T-cell (primary cell): ENCODE measurements at regions of chr20 and their contacts with region 1.

Region 1: DNA sequence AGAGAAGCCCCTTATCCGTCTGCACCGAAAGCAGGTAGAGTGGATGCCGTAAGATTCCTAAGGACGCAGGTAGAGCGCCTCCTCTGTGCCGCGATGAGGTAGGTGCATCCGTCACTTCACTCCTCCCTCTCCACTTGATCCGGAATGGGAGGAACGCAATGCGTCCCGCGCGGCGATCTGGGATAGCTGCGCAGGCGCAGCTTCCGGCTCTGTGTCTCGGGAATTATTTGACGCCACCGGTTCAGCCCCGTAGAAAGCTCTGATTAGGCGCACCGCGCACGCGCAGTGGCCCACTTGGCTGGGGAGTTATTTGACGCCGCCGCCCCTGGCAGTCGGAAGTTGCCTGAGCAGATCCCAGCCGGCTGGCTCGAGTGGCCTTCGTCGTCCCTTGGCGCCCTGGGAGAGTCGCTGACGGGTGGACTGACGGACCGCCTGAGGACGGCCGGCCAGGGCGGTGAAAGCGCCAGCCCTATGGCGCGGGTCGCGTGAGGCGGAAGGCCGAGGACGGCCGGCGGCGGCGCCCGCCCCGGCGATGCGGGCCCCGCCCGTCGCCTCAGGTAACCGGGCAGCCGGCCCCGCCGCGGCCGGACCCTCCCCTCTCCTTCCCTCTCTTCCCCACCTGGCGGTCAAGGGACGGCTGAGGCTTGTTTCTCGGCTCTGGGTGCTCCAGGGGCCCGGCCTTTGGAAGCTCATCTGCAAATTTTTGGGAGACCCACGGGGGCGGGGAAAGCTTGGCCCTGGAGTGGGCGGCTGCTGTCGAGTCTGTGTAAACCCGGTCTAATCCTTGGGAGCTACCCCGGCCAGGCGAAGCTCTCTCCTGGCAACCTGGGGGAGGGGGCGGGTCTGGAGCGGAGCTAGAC is at the start of gene RALGAPB:
- DNase-seq: peak; percentile 94 to 100 (median 97)
- ATAC-seq: peak; percentile 93 to 95 (median 94)
- H3K4me3 ChIP-seq: peak within 1 kb of the TSS; percentile 86 to 91
- H3K4me3 Mint-ChIP-seq: peak within 1 kb of the TSS; percentile 85 to 86 (median 85)
- H3K27ac ChIP-seq: peak within 1 kb of the TSS; percentile 85
- H3K27ac Mint-ChIP-seq: peak within 1 kb of the TSS; percentile 86 to 93
- H3K4me1 ChIP-seq: peaks cover 13 to 27% of the 10 kb centered on the region in 2 experiments
- H3K4me1 Mint-ChIP-seq: peaks cover 43 to 53% (median 53%) of the 10 kb centered on the region in 3 donors
- H3K27me3 ChIP-seq: peaks cover 0 to 3% of the 10 kb centered on the region in 2 experiments
- H3K27me3 Mint-ChIP-seq: no peaks in the 10 kb centered on the region
- total RNA-seq, gene RALGAPB: 42.7 to 50.1 (median 46.1) TPM

Region 2: GRCh38 chr20:38337561-38338140 is 135.1 kb before region 1 on chr20:
- CTCF ChIA-PET with region 1: no interaction called
- POLR2A ChIA-PET with region 1: no interaction called
- DNase-seq: no peak
- ATAC-seq: no peak
- H3K4me3 ChIP-seq: no peak overlapping the region
- H3K4me3 Mint-ChIP-seq: no peak overlapping the region
- H3K27ac ChIP-seq: no peak overlapping the region
- H3K27ac Mint-ChIP-seq: no peak overlapping the region
- H3K4me1 ChIP-seq: no peaks in the 10 kb centered on the region
- H3K4me1 Mint-ChIP-seq: no peaks in the 10 kb centered on the region
- H3K27me3 ChIP-seq: peaks cover 0 to 33% of the 10 kb centered on the region in 2 experiments
- H3K27me3 Mint-ChIP-seq: peaks cover 16 to 23% of the 10 kb centered on the region in 2 donors

Region 3: GRCh38 chr20:38446441-38447209 is 26.1 kb before region 1 on chr20:
- CTCF ChIA-PET with region 1: interaction called in 1 of 2 experiments, 29 read pairs
- POLR2A ChIA-PET with region 1: interaction called, 3 read pairs
- DNase-seq: peak; percentile 79 to 96 (median 89)
- ATAC-seq: peak; percentile 95 to 98 (median 97)
- H3K4me3 ChIP-seq: peak overlapping the region; percentile 73 to 75
- H3K4me3 Mint-ChIP-seq: peak overlapping the region; percentile 83 to 89 (median 87)
- H3K27ac ChIP-seq: peak overlapping the region; percentile 70
- H3K27ac Mint-ChIP-seq: peak overlapping the region; percentile 81 to 86
- H3K4me1 ChIP-seq: peaks cover 0 to 19% of the 10 kb centered on the region in 2 experiments
- H3K4me1 Mint-ChIP-seq: peaks cover 27 to 31% (median 29%) of the 10 kb centered on the region in 3 donors
- H3K27me3 ChIP-seq: peaks cover 0 to 8% of the 10 kb centered on the region in 2 experiments
- H3K27me3 Mint-ChIP-seq: peaks cover 4 to 7% of the 10 kb centered on the region in 2 donors